GM12878 (cell line): ENCODE measurements at regions of chr12 and their contacts with region 1.

Region 1: GRCh38 chr12:7108796-7109571 is at the start of gene C1RL:
- DNase-seq: no peak
- ATAC-seq: peak; percentile 68
- H3K4me3 ChIP-seq: peak within 1 kb of the TSS; percentile 96
- H3K27ac ChIP-seq: peak within 1 kb of the TSS; percentile 99
- H3K4me1 ChIP-seq: peaks cover 12% of the 10 kb centered on the region
- H3K27me3 ChIP-seq: no peaks in the 10 kb centered on the region
- CTCF ChIP-seq: peak; percentile 93 to 98 (median 98)
- EP300 ChIP-seq: 0 out of 4 replicates have a peak, but pooled peaks of 1 of the 2 experiments have one; percentile 14
- POLR2A ChIP-seq: 0 out of 2 replicates have a peak, but pooled peaks have one; percentile 13
- RAD21 ChIP-seq: peak; percentile 56; the same call in 1 of the 2 replicates
- polyA plus RNA-seq, gene C1RL: 1.3 to 2.5 TPM

Region 2: GRCh38 chr12:6867413-6868210 is 241.4 kb before region 1 on chr12 and contains the start of gene TPI1:
- CTCF ChIA-PET with region 1: interaction called, 36 read pairs
- POLR2A ChIA-PET with region 1: interaction called, 3 read pairs
- RAD21 ChIA-PET with region 1: interaction called, 6 read pairs
- SMC1A ChIA-PET with region 1: interaction called, 5 read pairs
- in situ Hi-C with region 1: no loop called
- intact Hi-C with region 1: loop called (anchors 2 kb)
- DNase-seq: peak; percentile 23
- ATAC-seq: peak; percentile 86
- H3K4me3 ChIP-seq: peak within 1 kb of the TSS; percentile 100
- H3K27ac ChIP-seq: peak within 1 kb of the TSS; percentile 96
- H3K4me1 ChIP-seq: peaks cover 32% of the 10 kb centered on the region
- H3K27me3 ChIP-seq: no peaks in the 10 kb centered on the region
- CTCF ChIP-seq: no peak
- EP300 ChIP-seq: no peak
- POLR2A ChIP-seq: peak; percentile 88
- RAD21 ChIP-seq: no peak
- polyA plus RNA-seq, gene TPI1: 5,044 to 7,349 TPM

Region 3: GRCh38 chr12:6883252-6883651 is 225.7 kb before region 1 on chr12:
- CTCF ChIA-PET with region 1: no interaction called
- POLR2A ChIA-PET with region 1: no interaction called
- RAD21 ChIA-PET with region 1: no interaction called
- SMC1A ChIA-PET with region 1: no interaction called
- in situ Hi-C with region 1: no loop called
- intact Hi-C with region 1: no loop called
- DNase-seq: no peak
- ATAC-seq: no peak
- H3K4me3 ChIP-seq: no peak overlapping the region
- H3K27ac ChIP-seq: no peak overlapping the region
- H3K4me1 ChIP-seq: no peaks in the 10 kb centered on the region
- H3K27me3 ChIP-seq: no peaks in the 10 kb centered on the region
- CTCF ChIP-seq: no peak
- EP300 ChIP-seq: no peak
- POLR2A ChIP-seq: no peak
- RAD21 ChIP-seq: no peak

Region 4: GRCh38 chr12:6921996-6922946 is 186.7 kb before region 1 on chr12:
- CTCF ChIA-PET with region 1: interaction called, 61 read pairs
- POLR2A ChIA-PET with region 1: interaction called, 3 read pairs
- RAD21 ChIA-PET with region 1: interaction called, 14 read pairs
- SMC1A ChIA-PET with region 1: interaction called, 3 read pairs
- in situ Hi-C with region 1: no loop called
- intact Hi-C with region 1: loop called (anchors 5 kb)
- DNase-seq: no peak
- ATAC-seq: peak; percentile 32
- H3K4me3 ChIP-seq: peak overlapping the region; percentile 4; the same call in 1 of the 2 replicates
- H3K27ac ChIP-seq: peak overlapping the region; percentile 36
- H3K4me1 ChIP-seq: peaks cover 48% of the 10 kb centered on the region
- H3K27me3 ChIP-seq: no peaks in the 10 kb centered on the region
- CTCF ChIP-seq: 0 out of 6 replicates have a peak, but pooled peaks of 1 of the 3 experiments have one; percentile 13
- EP300 ChIP-seq: no peak
- POLR2A ChIP-seq: no peak
- RAD21 ChIP-seq: no peak

Region 5: DNA sequence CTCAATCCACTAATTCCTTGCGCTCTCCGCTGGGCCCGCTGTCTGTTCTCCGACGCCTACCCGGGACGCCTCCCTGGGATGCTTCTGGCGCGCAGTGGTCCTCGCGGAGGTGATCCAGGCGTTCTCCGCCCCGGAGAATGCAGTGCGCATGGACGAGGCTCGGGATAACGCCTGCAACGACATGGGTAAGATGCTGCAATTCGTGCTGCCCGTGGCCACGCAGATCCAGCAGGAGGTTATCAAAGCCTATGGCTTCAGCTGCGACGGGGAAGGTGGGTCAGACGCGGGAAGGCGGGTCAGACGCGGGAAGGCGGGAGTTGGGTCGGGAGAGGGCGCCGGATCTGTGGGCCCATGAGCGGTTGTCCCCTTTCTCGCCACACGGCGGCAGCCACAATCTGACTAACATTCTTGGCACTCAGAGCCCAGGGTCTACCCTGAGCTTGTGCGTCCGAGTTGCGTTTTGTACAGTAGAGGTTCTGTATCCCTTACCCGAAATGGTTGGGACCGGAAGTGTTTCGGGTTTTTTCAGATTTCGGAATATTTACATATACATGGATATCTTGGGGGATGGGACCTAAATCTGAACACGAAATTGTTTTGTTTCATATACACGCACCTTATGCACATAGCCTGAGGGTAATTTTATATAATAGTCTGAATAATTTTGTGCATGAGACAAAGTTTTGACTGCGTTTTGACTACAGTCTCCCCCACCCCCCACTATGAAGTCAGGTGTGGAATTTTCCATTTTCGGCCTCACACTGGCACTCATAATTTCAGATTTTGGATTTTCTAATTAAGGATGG is 164.4 kb before region 1 on chr12:
- CTCF ChIA-PET with region 1: interaction called, 57 read pairs
- POLR2A ChIA-PET with region 1: interaction called, 55 read pairs
- RAD21 ChIA-PET with region 1: interaction called, 89 read pairs
- SMC1A ChIA-PET with region 1: interaction called, 40 read pairs
- in situ Hi-C with region 1: no loop called
- intact Hi-C with region 1: loop called (anchors 2 kb)
- DNase-seq: peak; percentile 85
- ATAC-seq: peak; percentile 69
- H3K4me3 ChIP-seq: peak overlapping the region; percentile 78
- H3K27ac ChIP-seq: peak overlapping the region; percentile 91
- H3K4me1 ChIP-seq: peaks cover 36% of the 10 kb centered on the region
- H3K27me3 ChIP-seq: no peaks in the 10 kb centered on the region
- CTCF ChIP-seq: peak; percentile 85 to 99 (median 95); a peak in 5 of 6 replicates
- EP300 ChIP-seq: no peak
- POLR2A ChIP-seq: peak; percentile 87
- RAD21 ChIP-seq: peak; percentile 86

Region 6: GRCh38 chr12:6973986-6974615 is 134.9 kb before region 1 on chr12:
- CTCF ChIA-PET with region 1: interaction called, 13 read pairs
- POLR2A ChIA-PET with region 1: interaction called, 5 read pairs
- RAD21 ChIA-PET with region 1: no interaction called
- SMC1A ChIA-PET with region 1: interaction called, 6 read pairs
- in situ Hi-C with region 1: no loop called
- intact Hi-C with region 1: no loop called
- DNase-seq: no peak
- ATAC-seq: no peak
- H3K4me3 ChIP-seq: no peak overlapping the region
- H3K27ac ChIP-seq: no peak overlapping the region
- H3K4me1 ChIP-seq: peaks cover 20% of the 10 kb centered on the region
- H3K27me3 ChIP-seq: no peaks in the 10 kb centered on the region
- CTCF ChIP-seq: no peak
- EP300 ChIP-seq: no peak
- POLR2A ChIP-seq: 0 out of 2 replicates have a peak, but pooled peaks have one; percentile 26
- RAD21 ChIP-seq: no peak

Region 7: GRCh38 chr12:7058163-7058845 is 50.7 kb before region 1 on chr12:
- CTCF ChIA-PET with region 1: interaction called, 14 read pairs
- POLR2A ChIA-PET with region 1: no interaction called
- RAD21 ChIA-PET with region 1: interaction called, 4 read pairs
- SMC1A ChIA-PET with region 1: interaction called, 3 read pairs
- in situ Hi-C with region 1: no loop called
- intact Hi-C with region 1: no loop called
- DNase-seq: no peak
- ATAC-seq: no peak
- H3K4me3 ChIP-seq: no peak overlapping the region
- H3K27ac ChIP-seq: no peak overlapping the region
- H3K4me1 ChIP-seq: no peaks in the 10 kb centered on the region
- H3K27me3 ChIP-seq: peaks cover 3 to 5% of the 10 kb centered on the region in 2 experiments
- CTCF ChIP-seq: no peak
- EP300 ChIP-seq: no peak
- POLR2A ChIP-seq: no peak
- RAD21 ChIP-seq: no peak

Region 8: DNA sequence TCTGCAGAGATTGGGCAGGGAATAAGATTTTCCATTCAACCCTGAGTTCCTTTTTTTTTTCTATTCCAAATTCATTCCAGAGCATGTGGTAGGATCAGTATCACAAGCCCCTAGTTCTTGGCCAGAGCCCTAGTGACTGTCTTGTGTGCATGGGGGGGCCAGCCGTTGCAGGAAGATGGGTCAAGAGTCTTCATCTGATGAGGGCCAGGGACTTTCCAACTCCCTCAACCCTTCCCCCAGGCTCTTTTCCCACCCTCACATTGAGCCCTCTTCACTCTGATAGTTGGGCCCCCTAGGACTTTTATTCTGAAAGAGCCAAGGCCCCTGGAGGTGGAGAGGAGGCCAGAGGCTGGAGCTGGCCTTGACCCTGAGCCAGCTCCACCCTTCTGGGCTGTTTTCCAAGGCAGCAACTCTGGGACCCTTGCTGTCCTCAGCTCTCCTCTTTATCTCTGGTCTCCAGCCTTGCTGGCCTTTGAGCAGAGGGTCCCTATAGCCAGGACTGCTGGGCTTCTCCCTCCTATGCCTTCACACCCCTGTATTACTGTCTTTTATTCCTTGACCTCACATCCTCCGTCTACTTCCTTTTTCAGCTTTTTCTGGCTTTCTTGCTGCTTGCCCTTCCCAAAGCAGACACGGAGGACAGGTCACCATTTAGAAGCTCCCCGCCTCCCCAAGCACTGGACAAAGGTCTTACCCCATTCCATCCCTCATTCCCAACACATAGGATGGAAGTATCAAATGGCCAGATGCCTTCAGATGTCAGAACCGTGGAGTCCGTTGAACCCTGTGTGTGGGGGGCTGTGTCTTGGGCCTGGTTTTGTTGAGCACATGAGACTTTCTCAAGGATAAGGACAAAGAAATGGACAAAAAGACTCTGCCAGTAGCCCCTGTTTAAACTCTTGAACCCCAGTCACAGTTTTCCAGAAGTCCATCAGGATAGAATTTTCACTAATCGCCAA is 14.1 kb after region 1 on chr12:
- CTCF ChIA-PET with region 1: interaction called, 21 read pairs
- POLR2A ChIA-PET with region 1: interaction called, 3 read pairs
- RAD21 ChIA-PET with region 1: no interaction called
- SMC1A ChIA-PET with region 1: interaction called, 4 read pairs
- in situ Hi-C with region 1: no loop called
- intact Hi-C with region 1: no loop called
- DNase-seq: no peak
- ATAC-seq: no peak
- H3K4me3 ChIP-seq: no peak overlapping the region
- H3K27ac ChIP-seq: no peak overlapping the region
- H3K4me1 ChIP-seq: no peaks in the 10 kb centered on the region
- H3K27me3 ChIP-seq: no peaks in the 10 kb centered on the region
- CTCF ChIP-seq: no peak
- EP300 ChIP-seq: no peak
- POLR2A ChIP-seq: no peak
- RAD21 ChIP-seq: no peak